Activated CD8-positive, alpha-beta T cell treated with anti-CD3 and anti-CD28 coated beads, Interleukin-2, amount 10 ng/mL, durations not matched to agents 7 days and 5 days (primary cell): ENCODE measurements at regions of chr17 and their contacts with region 1.

Region 1: DNA sequence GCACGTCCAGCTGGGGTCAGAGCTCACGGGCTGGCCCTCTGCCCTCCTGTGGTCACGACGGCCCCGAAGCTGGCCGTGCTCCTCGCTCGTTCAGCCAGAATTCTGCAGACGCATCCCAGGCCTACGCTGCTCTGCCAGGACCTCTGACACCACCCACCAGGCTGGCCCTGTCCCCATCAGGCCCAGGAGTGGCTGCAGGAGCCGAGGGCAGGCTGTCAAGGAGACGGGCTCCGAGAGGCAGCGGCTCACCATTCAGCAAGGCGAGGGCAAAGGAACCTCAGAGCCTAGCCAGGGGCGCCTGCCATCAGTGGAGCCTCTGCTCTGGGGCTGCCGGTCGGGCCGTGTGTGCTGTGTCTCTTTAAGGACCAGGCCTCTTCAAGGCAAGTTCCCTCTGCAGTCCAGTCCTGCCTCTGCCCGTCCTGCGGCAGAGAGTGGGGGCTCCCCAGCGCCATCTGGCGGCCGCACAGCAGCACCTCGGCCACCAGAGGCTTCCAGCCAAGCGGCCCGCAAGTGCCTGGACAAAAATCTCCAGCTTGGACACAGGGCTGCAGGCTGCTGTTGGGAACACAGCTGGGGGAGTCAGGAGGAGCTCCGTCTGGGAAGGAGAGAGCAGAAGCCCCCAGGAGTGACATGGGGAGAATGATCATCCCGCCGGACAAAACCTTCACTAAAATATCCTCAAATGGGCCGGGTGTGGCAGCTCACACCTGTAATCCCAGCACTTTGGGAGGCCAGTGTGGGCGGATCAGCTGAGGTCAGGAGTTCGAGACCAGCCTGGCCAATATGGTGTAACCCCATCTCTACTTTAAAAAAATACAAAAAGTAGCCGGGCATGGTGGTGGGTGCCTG is 7.4 kb upstream of the ABR start:
- DNase-seq: peak; percentile 80
- ATAC-seq: peak; percentile 95
- H3K4me3 Mint-ChIP-seq: no peak overlapping the region
- H3K27ac Mint-ChIP-seq: peak overlapping the region; percentile 61
- H3K4me1 Mint-ChIP-seq: peaks cover 29% of the 10 kb centered on the region
- H3K27me3 Mint-ChIP-seq: peaks cover 5% of the 10 kb centered on the region

Region 2: GRCh38 chr17:1116602-1117001 is 70.5 kb before region 1 on chr17:
- CTCF ChIA-PET with region 1: interaction called, 77 read pairs
- POLR2A ChIA-PET with region 1: no interaction called
- DNase-seq: no peak
- ATAC-seq: no peak
- H3K4me3 Mint-ChIP-seq: no peak overlapping the region
- H3K27ac Mint-ChIP-seq: peak overlapping the region; percentile 70
- H3K4me1 Mint-ChIP-seq: peaks cover 49% of the 10 kb centered on the region
- H3K27me3 Mint-ChIP-seq: no peaks in the 10 kb centered on the region

Region 3: GRCh38 chr17:1197781-1198490 is 10.8 kb after region 1 on chr17:
- CTCF ChIA-PET with region 1: interaction called, 44 read pairs
- POLR2A ChIA-PET with region 1: interaction called, 5 read pairs
- DNase-seq: peak; percentile 91
- ATAC-seq: peak; percentile 70
- H3K4me3 Mint-ChIP-seq: peak overlapping the region; percentile 49
- H3K27ac Mint-ChIP-seq: peak overlapping the region; percentile 92
- H3K4me1 Mint-ChIP-seq: peaks cover 78% of the 10 kb centered on the region
- H3K27me3 Mint-ChIP-seq: no peaks in the 10 kb centered on the region

Region 4: GRCh38 chr17:1203111-1203966 is 16.2 kb after region 1 on chr17:
- CTCF ChIA-PET with region 1: interaction called, 44 read pairs
- POLR2A ChIA-PET with region 1: interaction called, 5 read pairs
- DNase-seq: peak; percentile 56
- ATAC-seq: peak; percentile 17
- H3K4me3 Mint-ChIP-seq: no peak overlapping the region
- H3K27ac Mint-ChIP-seq: no peak overlapping the region
- H3K4me1 Mint-ChIP-seq: peaks cover 55% of the 10 kb centered on the region
- H3K27me3 Mint-ChIP-seq: peaks cover 2% of the 10 kb centered on the region